ENCODE measurements at regions of chr7 and their contacts with region 1.

Region 1: DNA sequence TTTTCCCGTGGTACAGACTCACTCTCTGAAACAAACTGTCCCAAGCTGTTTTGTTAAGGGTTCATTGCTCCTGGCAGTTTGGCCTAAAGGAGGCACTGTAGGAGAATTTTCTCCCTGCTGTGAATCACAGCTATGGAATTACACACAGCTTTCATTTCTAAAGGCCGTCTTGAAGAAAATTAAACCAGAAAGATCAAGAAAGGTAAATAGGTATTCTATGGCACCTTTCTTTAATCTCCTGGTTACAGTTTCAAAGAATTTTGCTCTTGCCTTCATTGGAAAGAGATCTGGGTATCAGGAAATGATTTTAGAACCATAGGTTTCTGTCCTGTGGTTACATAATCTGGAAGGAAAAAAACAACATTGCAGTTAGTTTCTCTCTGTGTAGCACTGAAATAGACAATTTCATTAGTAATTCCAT is 51.2 kb downstream of the PDK4 start:
- DNase-seq: peak; percentile 39 to 66
- ATAC-seq: peak; percentile 76 to 78
- H3K4me3 ChIP-seq: peak overlapping the region; percentile 45 to 55 (median 46)
- H3K27ac ChIP-seq: peak overlapping the region; percentile 92 to 100 (median 94)
- H3K4me1 ChIP-seq: peaks cover 50 to 54% of the 10 kb centered on the region in 2 donors
- H3K27me3 ChIP-seq: no peaks in the 10 kb centered on the region
- CTCF ChIP-seq: peak; percentile 53 to 77 (median 67)
- POLR2A ChIP-seq: peak in 1 of 2 donors; percentile 0

Region 2: DNA sequence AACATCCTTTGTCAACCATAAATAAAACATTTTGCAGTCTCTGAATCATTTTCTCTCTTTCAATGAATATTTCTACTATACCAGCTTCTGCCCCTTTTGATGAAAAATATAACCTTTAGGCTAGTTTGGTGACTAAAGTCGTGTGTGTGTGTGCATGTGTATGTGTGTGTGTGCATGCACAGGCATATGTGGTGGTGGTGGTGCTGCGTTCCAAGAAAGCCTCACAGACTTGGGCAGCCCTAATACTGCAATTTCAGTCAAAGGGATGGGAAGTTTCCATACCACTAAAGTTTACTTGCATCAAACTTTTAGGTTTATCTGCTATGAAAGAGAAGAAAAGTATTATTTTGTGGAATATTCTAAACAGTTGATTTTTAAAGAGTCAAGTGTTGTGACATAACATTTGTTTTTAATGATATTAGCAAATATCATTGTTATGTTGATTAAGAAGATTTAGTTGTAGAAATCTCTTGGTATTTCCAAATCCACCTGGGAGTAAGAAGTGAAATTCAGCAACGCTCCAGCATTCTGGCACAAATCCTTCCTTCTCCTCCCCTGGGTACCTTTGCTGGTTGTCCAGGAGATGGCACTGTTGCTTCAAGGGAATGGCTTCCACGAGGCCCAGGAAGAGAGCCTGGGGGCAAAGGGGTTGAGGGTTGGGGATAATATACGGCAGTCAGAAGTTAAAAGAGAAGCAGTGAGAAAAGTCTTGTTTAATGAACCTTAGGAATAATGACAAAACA is 17.9 kb before region 1 on chr7:
- in situ Hi-C with region 1: no loop called
- intact Hi-C with region 1: loop called (anchors 2 kb)
- DNase-seq: peak; percentile 30 to 42
- ATAC-seq: peak; percentile 87 to 95
- H3K4me3 ChIP-seq: no peak overlapping the region
- H3K27ac ChIP-seq: no peak overlapping the region
- H3K4me1 ChIP-seq: peaks cover 9 to 25% of the 10 kb centered on the region in 2 donors
- H3K27me3 ChIP-seq: no peaks in the 10 kb centered on the region
- CTCF ChIP-seq: peak; percentile 87 to 96 (median 89)
- POLR2A ChIP-seq: no peak

Region 3: GRCh38 chr7:95590387-95591248 is 45.5 kb after region 1 on chr7:
- in situ Hi-C with region 1: loop called in 3 of 4 experiments (anchors 5 to 10 kb)
- intact Hi-C with region 1: no loop called
- DNase-seq: no peak
- ATAC-seq: peak in 1 of 2 donors; percentile 35
- H3K4me3 ChIP-seq: peak overlapping the region; percentile 78 to 94 (median 87)
- H3K27ac ChIP-seq: peak overlapping the region; percentile 91 to 97 (median 96)
- H3K4me1 ChIP-seq: peaks cover 6 to 35% of the 10 kb centered on the region in 2 donors
- H3K27me3 ChIP-seq: no peaks in the 10 kb centered on the region
- CTCF ChIP-seq: no peak
- POLR2A ChIP-seq: peak; percentile 12 to 38

Region 4: GRCh38 chr7:95608359-95609173 is 63.5 kb after region 1 on chr7:
- in situ Hi-C with region 1: no loop called
- intact Hi-C with region 1: loop called (anchors 1 kb)
- DNase-seq: peak; percentile 96 to 97
- ATAC-seq: peak; percentile 99
- H3K4me3 ChIP-seq: peak overlapping the region; percentile 45 to 56 (median 53)
- H3K27ac ChIP-seq: peak overlapping the region; percentile 89 to 93 (median 91)
- H3K4me1 ChIP-seq: peaks cover 41 to 53% of the 10 kb centered on the region in 2 donors
- H3K27me3 ChIP-seq: no peaks in the 10 kb centered on the region
- CTCF ChIP-seq: no peak
- POLR2A ChIP-seq: peak in 1 of 2 donors; percentile 72

Region 5: GRCh38 chr7:95684037-95684436 is 138.9 kb after region 1 on chr7:
- in situ Hi-C with region 1: loop called in 2 of 4 experiments (anchors 5 kb)
- intact Hi-C with region 1: loop called (anchors 1 kb)
- DNase-seq: no peak
- ATAC-seq: peak; percentile 39 to 67
- H3K4me3 ChIP-seq: no peak overlapping the region
- H3K27ac ChIP-seq: peak overlapping the region; percentile 7 to 65 (median 56)
- H3K4me1 ChIP-seq: peaks cover 18 to 37% of the 10 kb centered on the region in 2 donors
- H3K27me3 ChIP-seq: no peaks in the 10 kb centered on the region
- CTCF ChIP-seq: peak; percentile 47 to 67 (median 65)
- POLR2A ChIP-seq: no peak

Region 6: GRCh38 chr7:95859434-95859833 is 314.3 kb after region 1 on chr7:
- in situ Hi-C with region 1: no loop called
- intact Hi-C with region 1: no loop called
- DNase-seq: no peak
- ATAC-seq: no peak
- H3K4me3 ChIP-seq: no peak overlapping the region
- H3K27ac ChIP-seq: no peak overlapping the region
- H3K4me1 ChIP-seq: no peaks in the 10 kb centered on the region
- H3K27me3 ChIP-seq: no peaks in the 10 kb centered on the region
- CTCF ChIP-seq: no peak
- POLR2A ChIP-seq: no peak